ENCODE measurements at regions of chr19 and their contacts with region 1.

Region 1: GRCh38 chr19:45862564-45863334 is at the start of gene SYMPK:
- DNase-seq: peak; percentile 96
- ATAC-seq: peak; percentile 94
- H3K4me3 Mint-ChIP-seq: peak within 1 kb of the TSS; percentile 96
- H3K27ac Mint-ChIP-seq: peak within 1 kb of the TSS; percentile 96
- H3K4me1 Mint-ChIP-seq: peaks cover 37% of the 10 kb centered on the region
- H3K27me3 Mint-ChIP-seq: peaks cover 19% of the 10 kb centered on the region
- CTCF ChIP-seq: no peak
- total RNA-seq, gene SYMPK: 131 and 150 TPM in 2 replicates

Region 2: DNA sequence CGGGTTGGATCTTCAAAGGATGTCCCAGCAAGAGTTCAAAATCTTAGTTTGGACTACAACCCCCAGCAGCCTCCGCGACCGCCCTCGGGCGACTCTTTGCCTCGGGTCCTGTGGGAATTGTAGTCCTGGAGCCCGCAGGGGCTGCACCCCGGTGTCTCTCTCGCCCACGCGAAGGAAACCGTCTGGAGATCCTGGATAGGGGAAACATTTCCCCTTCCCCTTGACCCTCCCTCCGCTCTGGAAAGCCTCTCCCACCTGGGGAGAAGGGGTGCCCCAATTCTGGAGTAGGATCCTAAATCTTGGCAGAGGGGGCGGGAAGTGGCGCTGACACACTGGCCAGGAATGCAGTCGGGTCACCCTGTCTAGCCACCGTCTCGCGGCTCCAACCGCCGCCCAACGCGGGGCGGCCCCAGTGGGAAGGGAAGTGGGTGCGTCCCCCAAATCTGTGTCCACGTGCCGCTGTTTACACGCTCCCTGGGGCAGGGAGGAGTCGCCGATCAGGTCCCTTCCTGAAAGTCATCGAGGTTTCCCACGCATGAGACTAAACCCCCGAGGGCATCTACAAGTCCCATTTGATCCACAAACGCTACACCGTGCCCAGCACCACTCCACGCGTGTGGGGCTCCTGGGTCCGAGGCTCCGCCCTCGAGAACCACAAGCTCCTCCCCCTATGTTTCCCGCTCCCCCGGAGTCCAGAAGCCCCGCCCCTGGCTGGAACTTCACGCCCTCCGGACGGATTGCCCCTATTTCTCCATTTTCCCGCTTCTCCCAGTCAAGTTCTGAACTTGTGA is 457.1 kb before region 1 on chr19:
- CTCF ChIA-PET with region 1: no interaction called
- POLR2A ChIA-PET with region 1: interaction called, 3 read pairs
- intact Hi-C with region 1: loop called (anchors 10 kb)
- DNase-seq: peak; percentile 76
- ATAC-seq: peak; percentile 65
- H3K4me3 Mint-ChIP-seq: peak overlapping the region; percentile 96
- H3K27ac Mint-ChIP-seq: peak overlapping the region; percentile 95
- H3K4me1 Mint-ChIP-seq: peaks cover 43% of the 10 kb centered on the region
- H3K27me3 Mint-ChIP-seq: peaks cover 12% of the 10 kb centered on the region
- CTCF ChIP-seq: no peak

Region 3: GRCh38 chr19:45717166-45717982 is 145.4 kb before region 1 on chr19:
- CTCF ChIA-PET with region 1: no interaction called
- POLR2A ChIA-PET with region 1: interaction called, 10 read pairs
- intact Hi-C with region 1: no loop called
- DNase-seq: peak; percentile 92
- ATAC-seq: peak; percentile 95
- H3K4me3 Mint-ChIP-seq: peak overlapping the region; percentile 96
- H3K27ac Mint-ChIP-seq: peak overlapping the region; percentile 92
- H3K4me1 Mint-ChIP-seq: peaks cover 35% of the 10 kb centered on the region
- H3K27me3 Mint-ChIP-seq: no peaks in the 10 kb centered on the region
- CTCF ChIP-seq: no peak

Region 4: DNA sequence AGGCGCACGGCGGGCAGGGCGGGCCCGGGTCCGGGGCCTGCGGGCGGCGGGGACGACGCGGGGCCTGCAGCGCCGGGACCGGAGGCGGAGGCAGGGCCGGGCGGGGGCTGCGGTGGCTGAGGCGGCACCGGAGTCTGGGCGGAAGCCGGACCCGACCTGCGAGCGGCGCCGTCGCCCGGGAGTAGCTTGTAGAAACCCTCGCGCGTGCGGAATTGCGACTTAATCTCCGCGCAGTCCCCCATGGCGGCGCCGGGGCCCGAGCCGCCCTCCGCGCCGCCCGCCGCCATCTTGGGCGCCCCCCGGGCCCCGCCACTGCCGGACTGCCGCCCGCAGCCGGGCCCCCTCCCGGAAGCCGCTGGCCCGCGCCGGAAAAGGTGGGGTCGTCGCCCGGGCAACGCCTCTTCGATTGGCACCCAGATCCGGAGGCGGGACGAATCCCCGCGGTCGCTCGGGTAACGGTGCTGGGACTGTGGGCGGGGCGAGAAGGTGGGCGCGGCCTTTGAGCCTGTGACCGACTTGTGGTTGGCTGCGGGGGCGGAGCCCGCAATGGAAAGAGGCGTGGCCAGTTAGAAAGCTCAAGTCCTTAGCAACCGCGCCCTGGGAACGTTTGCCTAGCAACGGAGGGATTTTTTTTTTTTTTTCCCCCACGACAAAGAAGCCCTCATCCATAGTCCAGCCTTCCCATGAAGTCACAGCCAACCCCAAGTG is 70.1 kb before region 1 on chr19 and contains the start of gene DMWD:
- CTCF ChIA-PET with region 1: no interaction called
- POLR2A ChIA-PET with region 1: interaction called, 5 read pairs
- intact Hi-C with region 1: loop called (anchors 1 kb)
- DNase-seq: peak; percentile 100
- ATAC-seq: peak; percentile 96
- H3K4me3 Mint-ChIP-seq: peak within 1 kb of the TSS; percentile 88
- H3K27ac Mint-ChIP-seq: peak within 1 kb of the TSS; percentile 76
- H3K4me1 Mint-ChIP-seq: peaks cover 27% of the 10 kb centered on the region
- H3K27me3 Mint-ChIP-seq: peaks cover 5% of the 10 kb centered on the region
- CTCF ChIP-seq: no peak
- total RNA-seq, gene DMWD: 64.7 and 77.3 TPM in 2 replicates

Region 5: GRCh38 chr19:45902651-45903625 is 40.2 kb after region 1 on chr19:
- CTCF ChIA-PET with region 1: interaction called, 6 read pairs
- POLR2A ChIA-PET with region 1: interaction called, 33 read pairs
- intact Hi-C with region 1: loop called (anchors 1 kb)
- DNase-seq: peak; percentile 99
- ATAC-seq: peak; percentile 82
- H3K4me3 Mint-ChIP-seq: peak overlapping the region; percentile 90
- H3K27ac Mint-ChIP-seq: peak overlapping the region; percentile 82
- H3K4me1 Mint-ChIP-seq: peaks cover 24% of the 10 kb centered on the region
- H3K27me3 Mint-ChIP-seq: no peaks in the 10 kb centered on the region
- CTCF ChIP-seq: no peak

Region 6: GRCh38 chr19:46016426-46017094 is 153.8 kb after region 1 on chr19:
- CTCF ChIA-PET with region 1: interaction called, 6 read pairs
- POLR2A ChIA-PET with region 1: interaction called, 3 read pairs
- intact Hi-C with region 1: loop called (anchors 1 kb)
- DNase-seq: peak; percentile 74
- ATAC-seq: peak; percentile 82
- H3K4me3 Mint-ChIP-seq: peak overlapping the region; percentile 85
- H3K27ac Mint-ChIP-seq: peak overlapping the region; percentile 8
- H3K4me1 Mint-ChIP-seq: peaks cover 19% of the 10 kb centered on the region
- H3K27me3 Mint-ChIP-seq: peaks cover 12% of the 10 kb centered on the region
- CTCF ChIP-seq: no peak